Sigmoid colon (tissue), 7 donors: ENCODE measurements at regions of chr17 and their contacts with region 1.

Region 1: GRCh38 chr17:47323382-47324222 is at the start of gene EFCAB13:
- DNase-seq: peak; percentile 95
- H3K4me3 ChIP-seq: peak within 1 kb of the TSS; percentile 50 to 71 (median 62)
- H3K27ac ChIP-seq: peak within 1 kb of the TSS; percentile 86 to 96 (median 92)
- H3K4me1 ChIP-seq: no peaks in the 10 kb centered on the region
- H3K27me3 ChIP-seq: no peaks in the 10 kb centered on the region
- CTCF ChIP-seq: no peak
- EP300 ChIP-seq: no peak
- POLR2A ChIP-seq: peak; percentile 93 to 94
- total RNA-seq, gene EFCAB13: 8.7 to 16.3 (median 15.4) TPM

Region 2: DNA sequence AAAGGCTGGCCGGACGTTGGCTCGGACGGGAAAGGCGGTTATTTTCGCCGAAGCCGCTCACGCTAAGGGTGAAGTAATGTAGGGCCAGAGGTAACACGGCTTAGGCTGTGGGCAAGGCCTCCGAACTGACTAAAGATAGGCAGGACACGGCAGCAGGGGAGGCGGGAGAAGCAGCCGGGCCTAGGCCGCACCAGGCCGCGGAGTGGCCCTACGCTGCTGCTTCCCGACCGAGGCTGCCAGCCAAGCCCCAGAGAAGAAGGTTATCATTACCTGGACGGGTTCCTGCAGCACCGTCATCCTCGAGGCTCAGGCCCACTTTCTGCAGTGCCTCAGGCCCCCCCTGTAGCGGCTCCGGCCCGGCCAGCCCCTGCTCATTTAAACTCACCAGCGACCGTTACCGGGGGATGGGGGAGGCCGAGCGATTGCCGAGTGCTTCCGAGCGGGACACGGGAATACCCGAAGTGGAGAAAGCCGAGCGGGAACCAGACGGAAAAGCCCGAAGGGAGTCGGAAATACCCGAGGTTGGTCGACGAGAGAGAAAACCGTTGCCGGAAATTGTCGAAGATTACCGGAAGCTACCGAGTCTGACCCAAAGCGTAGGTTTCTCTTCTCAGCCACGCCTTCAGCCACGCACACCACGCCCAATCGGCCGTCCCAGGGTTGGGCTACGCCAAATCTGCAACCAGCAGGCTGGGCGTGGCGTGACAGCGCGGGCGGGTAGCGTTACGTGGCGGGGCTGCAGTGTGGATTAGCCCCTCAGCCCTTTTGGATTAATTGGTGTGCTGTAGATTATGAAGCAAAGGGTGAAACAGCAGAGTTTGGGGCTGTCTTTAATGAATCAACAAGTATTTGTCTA is 134.5 kb before region 1 on chr17 and contains the start of gene CDC27:
- intact Hi-C with region 1: loop called (anchors 5 kb)
- DNase-seq: peak; percentile 99
- H3K4me3 ChIP-seq: peak within 1 kb of the TSS; percentile 75 to 89 (median 82)
- H3K27ac ChIP-seq: peak within 1 kb of the TSS; percentile 89 to 97 (median 96)
- H3K4me1 ChIP-seq: peaks cover 0 to 45% (median 34%) of the 10 kb centered on the region in 4 donors
- H3K27me3 ChIP-seq: no peaks in the 10 kb centered on the region
- CTCF ChIP-seq: no peak
- EP300 ChIP-seq: no peak
- POLR2A ChIP-seq: peak; percentile 45 to 64
- total RNA-seq, gene CDC27: 41.0 to 61.4 (median 56.2) TPM

Region 3: GRCh38 chr17:47615766-47616424 is 292.3 kb after region 1 on chr17:
- intact Hi-C with region 1: loop called (anchors 10 kb)
- DNase-seq: no peak
- H3K4me3 ChIP-seq: no peak overlapping the region
- H3K27ac ChIP-seq: peak overlapping the region in 1 of 4 donors; percentile 16
- H3K4me1 ChIP-seq: peaks cover 0 to 24% (median 9%) of the 10 kb centered on the region in 4 donors
- H3K27me3 ChIP-seq: no peaks in the 10 kb centered on the region
- CTCF ChIP-seq: peak; percentile 36 to 75 (median 68)
- EP300 ChIP-seq: no peak
- POLR2A ChIP-seq: no peak